Calu3 (cell line): ENCODE measurements at regions of chr10 and their contacts with region 1.

Region 1: DNA sequence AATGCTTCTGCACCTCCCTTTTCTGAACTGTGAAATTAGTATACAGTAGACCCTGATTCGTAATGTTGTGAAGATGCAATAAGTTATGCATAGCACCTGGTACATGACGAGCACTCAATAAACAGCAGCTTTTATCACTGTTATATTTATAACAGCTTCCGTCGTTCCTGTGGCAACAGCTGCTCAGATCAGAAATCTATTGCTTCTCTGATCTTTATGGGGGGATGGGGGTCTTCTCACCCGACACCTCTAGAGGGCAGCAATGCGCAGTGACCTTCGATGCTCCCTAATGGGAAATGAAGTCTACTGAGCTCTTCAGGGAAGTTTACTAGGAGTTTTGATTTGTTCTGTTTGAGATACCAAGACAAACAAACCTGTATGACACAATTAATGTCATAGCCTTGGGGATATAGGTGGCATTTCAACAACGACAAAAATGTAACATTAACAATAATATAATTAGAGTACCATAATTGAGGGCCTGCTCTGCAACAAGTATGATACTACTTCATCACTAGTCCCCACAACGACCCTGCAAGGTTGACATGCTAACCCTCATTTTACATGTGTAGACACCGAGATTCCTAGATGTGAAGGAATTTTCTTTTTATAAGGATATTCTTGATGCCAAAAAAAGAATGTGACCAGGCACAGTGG is 289.6 kb downstream of the SFMBT2 start:
- DNase-seq: peak; percentile 61
- H3K4me3 Mint-ChIP-seq: no peak overlapping the region
- H3K27ac Mint-ChIP-seq: no peak overlapping the region
- H3K4me1 Mint-ChIP-seq: no peaks in the 10 kb centered on the region
- H3K27me3 Mint-ChIP-seq: peaks cover 78% of the 10 kb centered on the region
- CTCF ChIP-seq: peak; percentile 60

Region 2: DNA sequence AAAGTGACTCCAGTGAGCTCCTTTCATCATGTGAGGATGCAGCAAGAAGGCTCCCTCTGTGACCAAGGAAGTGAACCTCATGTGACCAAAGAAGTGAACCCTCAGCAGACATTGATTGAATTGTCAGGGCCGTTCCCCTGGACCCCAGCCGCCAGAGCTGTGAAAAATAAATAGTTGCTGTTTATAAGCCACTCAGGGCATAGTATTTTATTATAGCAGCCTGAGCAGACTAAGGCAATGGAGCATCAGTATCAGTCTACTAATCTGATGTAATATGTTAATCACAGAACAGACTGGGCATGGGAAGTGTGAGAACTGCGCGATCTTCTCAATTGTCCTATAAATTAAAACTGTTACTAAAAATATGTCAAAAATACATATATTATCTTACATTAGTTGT is 156.7 kb before region 1 on chr10:
- CTCF ChIA-PET with region 1: no interaction called
- intact Hi-C with region 1: no loop called
- DNase-seq: no peak
- H3K4me3 Mint-ChIP-seq: no peak overlapping the region
- H3K27ac Mint-ChIP-seq: no peak overlapping the region
- H3K4me1 Mint-ChIP-seq: no peaks in the 10 kb centered on the region
- H3K27me3 Mint-ChIP-seq: peaks cover 77% of the 10 kb centered on the region
- CTCF ChIP-seq: no peak

Region 3: GRCh38 chr10:7054900-7055299 is 66.4 kb before region 1 on chr10:
- CTCF ChIA-PET with region 1: no interaction called
- intact Hi-C with region 1: no loop called
- DNase-seq: no peak
- H3K4me3 Mint-ChIP-seq: no peak overlapping the region
- H3K27ac Mint-ChIP-seq: no peak overlapping the region
- H3K4me1 Mint-ChIP-seq: no peaks in the 10 kb centered on the region
- H3K27me3 Mint-ChIP-seq: peaks cover 34% of the 10 kb centered on the region
- CTCF ChIP-seq: no peak

Region 4: GRCh38 chr10:7400068-7400715 is 278.9 kb after region 1 on chr10:
- CTCF ChIA-PET with region 1: no interaction called
- intact Hi-C with region 1: loop called (anchors 5 kb)
- DNase-seq: no peak
- H3K4me3 Mint-ChIP-seq: no peak overlapping the region
- H3K27ac Mint-ChIP-seq: no peak overlapping the region
- H3K4me1 Mint-ChIP-seq: no peaks in the 10 kb centered on the region
- H3K27me3 Mint-ChIP-seq: peaks cover 41% of the 10 kb centered on the region
- CTCF ChIP-seq: no peak

Region 5: DNA sequence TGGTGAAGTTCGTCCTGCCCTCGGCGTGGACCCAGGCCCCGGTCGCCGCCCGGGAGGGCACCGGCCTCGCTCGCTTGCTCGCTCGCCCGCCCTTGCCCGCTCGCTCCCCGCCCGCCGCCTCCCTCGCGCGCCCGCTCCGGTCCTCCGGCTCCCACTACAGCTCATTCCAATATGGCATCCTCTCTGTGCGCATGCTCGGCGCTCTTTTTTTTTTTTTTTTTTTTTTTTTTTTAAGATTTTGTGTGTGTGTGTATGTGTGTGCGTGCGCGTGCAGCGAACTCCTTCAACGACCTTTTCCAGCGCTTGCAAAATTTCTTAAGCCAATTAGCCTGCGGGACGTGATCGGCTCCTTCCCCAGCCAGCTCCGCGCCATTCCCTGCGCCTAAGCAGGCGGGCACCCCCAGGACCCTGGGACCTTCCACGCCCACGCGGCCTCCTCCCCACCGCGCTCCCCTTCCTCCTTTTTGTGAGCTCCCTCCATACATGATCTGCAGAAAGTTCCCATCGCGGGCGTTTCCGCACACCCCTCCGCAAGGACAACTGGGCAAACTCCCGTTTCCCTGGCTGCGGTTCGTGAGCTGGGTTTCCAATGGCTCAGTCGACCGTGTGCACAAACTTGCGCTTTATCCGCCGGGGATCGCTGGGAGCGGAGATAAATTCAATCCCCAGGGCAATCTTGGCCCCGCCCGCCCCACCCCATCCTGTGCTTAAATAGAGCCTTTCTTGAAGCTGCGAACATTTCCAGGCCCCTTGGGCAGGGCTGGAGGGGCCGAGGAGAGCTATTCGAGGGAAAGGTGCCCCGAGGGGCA is 289.8 kb after region 1 on chr10 and contains the start of gene SFMBT2:
- CTCF ChIA-PET with region 1: interaction called, 10 read pairs
- intact Hi-C with region 1: loop called (anchors 2 kb)
- DNase-seq: peak; percentile 44
- H3K4me3 Mint-ChIP-seq: peak within 1 kb of the TSS; percentile 75
- H3K27ac Mint-ChIP-seq: no peak within 1 kb of the TSS
- H3K4me1 Mint-ChIP-seq: peaks cover 17% of the 10 kb centered on the region
- H3K27me3 Mint-ChIP-seq: peaks cover 47% of the 10 kb centered on the region
- CTCF ChIP-seq: no peak
- total RNA-seq, gene SFMBT2: 0.64 and 1.7 TPM in 2 replicates

Region 6: GRCh38 chr10:7417103-7417623 is 295.9 kb after region 1 on chr10:
- CTCF ChIA-PET with region 1: interaction called, 3 read pairs
- intact Hi-C with region 1: loop called (anchors 2 kb)
- DNase-seq: no peak
- H3K4me3 Mint-ChIP-seq: no peak overlapping the region
- H3K27ac Mint-ChIP-seq: no peak overlapping the region
- H3K4me1 Mint-ChIP-seq: no peaks in the 10 kb centered on the region
- H3K27me3 Mint-ChIP-seq: peaks cover 59% of the 10 kb centered on the region
- CTCF ChIP-seq: no peak